ENCODE measurements at regions of chr1 and their contacts with region 1.

Region 1: GRCh38 chr1:999725-1000356 is at the start of gene HES4:
- DNase-seq: peak; percentile 67 to 96
- H3K4me3 ChIP-seq: peak within 1 kb of the TSS; percentile 58 to 68
- H3K27ac ChIP-seq: peak within 1 kb of the TSS; percentile 98
- H3K4me1 ChIP-seq: peaks cover 17 to 19% of the 10 kb centered on the region in 2 donors
- H3K27me3 ChIP-seq: no peaks in the 10 kb centered on the region
- CTCF ChIP-seq: peak in 1 of 3 experiments; percentile 7
- total RNA-seq, gene HES4: 285 TPM

Region 2: DNA sequence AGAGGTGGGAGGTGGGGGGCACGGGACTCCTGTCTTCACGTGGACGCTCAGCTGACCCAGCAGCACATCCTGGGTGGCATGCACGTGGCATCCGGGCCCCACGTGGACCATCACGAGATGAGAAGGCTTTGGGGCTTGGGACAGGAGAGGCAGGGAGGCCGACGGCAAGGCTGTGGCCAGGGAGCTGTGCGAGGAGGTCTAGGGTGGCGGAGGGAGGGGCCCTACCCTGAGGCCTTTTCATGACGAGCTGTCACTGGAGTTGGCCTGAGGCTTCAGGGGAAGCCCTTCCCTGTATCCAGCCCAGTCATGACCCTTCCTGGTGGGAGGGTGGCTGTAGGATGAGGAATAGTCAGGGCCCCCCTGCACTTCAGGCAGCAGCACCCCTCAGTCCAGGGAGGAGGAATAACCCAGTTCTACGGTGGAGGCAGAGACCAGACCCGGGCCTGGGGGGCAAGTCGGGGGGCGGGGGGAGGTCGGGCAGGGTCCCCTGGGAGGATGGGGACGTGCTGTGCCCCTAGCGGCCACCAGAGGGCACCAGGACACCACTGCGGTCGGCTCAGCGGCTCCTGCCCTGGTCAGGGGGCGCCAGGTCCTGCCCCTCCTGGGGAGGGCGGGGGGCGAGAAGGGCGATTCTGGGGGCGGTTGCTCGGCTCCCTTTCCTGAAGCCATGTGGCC is 15.9 kb before region 1 on chr1:
- intact Hi-C with region 1: loop called (anchors 1 kb)
- DNase-seq: no peak
- H3K4me3 ChIP-seq: peak overlapping the region in 1 of 2 donors; percentile 21
- H3K27ac ChIP-seq: no peak overlapping the region
- H3K4me1 ChIP-seq: no peaks in the 10 kb centered on the region
- H3K27me3 ChIP-seq: no peaks in the 10 kb centered on the region
- CTCF ChIP-seq: peak; percentile 53 to 99 (median 98)

Region 3: GRCh38 chr1:1019122-1019999 is 19.5 kb after region 1 on chr1:
- intact Hi-C with region 1: loop called (anchors 1 kb)
- DNase-seq: peak in 1 of 2 donors; percentile 87
- H3K4me3 ChIP-seq: peak overlapping the region; percentile 93 to 95
- H3K27ac ChIP-seq: peak overlapping the region; percentile 87 to 93
- H3K4me1 ChIP-seq: peaks cover 10% of the 10 kb centered on the region in 2 donors
- H3K27me3 ChIP-seq: no peaks in the 10 kb centered on the region
- CTCF ChIP-seq: peak; percentile 28 to 54 (median 48)

Region 4: DNA sequence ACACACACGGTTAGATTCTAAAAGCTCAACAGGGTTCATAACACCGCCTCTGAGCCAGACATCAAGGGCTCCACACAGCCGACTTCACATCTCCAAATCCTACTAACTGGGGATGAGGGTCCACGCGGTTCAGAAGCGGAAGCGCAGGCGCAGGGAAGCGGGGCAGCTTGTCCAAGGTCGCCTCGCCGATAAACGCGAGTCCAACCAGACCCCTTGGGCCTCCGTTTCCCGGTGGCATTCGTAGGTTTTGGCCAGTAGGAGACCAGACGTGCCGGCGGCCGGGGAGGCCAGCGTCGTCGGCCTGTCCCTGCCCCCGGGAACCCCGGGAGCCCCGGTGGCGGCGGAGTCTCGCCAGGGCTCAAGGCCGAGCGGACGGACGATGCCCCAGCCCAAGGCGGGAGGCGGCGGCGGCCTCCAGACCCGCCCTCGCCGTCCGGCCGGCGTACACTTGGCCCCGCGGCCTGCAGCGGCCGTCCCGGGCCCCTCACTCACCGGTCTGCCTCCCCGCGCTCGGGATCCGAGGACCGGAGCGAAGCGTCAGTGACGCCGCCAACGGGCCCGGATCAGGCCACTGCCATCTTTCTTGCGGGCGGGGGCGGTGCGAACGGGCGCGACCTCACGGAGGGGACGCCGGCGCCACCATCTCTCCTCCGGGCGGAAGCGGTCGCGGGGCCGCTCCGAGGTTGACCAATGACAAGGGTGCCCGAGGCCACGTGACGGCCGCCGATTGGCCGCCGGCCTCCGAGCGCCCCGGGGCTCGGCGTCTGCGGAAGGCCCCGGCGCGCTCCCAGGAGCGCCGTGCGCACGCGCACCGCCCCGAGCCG is 231.8 kb after region 1 on chr1 and contains the start of gene SDF4:
- intact Hi-C with region 1: loop called (anchors 5 kb)
- DNase-seq: peak; percentile 77 to 98
- H3K4me3 ChIP-seq: peak within 1 kb of the TSS; percentile 91 to 95
- H3K27ac ChIP-seq: peak within 1 kb of the TSS; percentile 89 to 94
- H3K4me1 ChIP-seq: peaks cover 23% of the 10 kb centered on the region in 2 donors
- H3K27me3 ChIP-seq: no peaks in the 10 kb centered on the region
- CTCF ChIP-seq: no peak
- total RNA-seq, gene SDF4: 223 TPM